ENCODE measurements at regions of chr2 and their contacts with region 1.

Region 1: DNA sequence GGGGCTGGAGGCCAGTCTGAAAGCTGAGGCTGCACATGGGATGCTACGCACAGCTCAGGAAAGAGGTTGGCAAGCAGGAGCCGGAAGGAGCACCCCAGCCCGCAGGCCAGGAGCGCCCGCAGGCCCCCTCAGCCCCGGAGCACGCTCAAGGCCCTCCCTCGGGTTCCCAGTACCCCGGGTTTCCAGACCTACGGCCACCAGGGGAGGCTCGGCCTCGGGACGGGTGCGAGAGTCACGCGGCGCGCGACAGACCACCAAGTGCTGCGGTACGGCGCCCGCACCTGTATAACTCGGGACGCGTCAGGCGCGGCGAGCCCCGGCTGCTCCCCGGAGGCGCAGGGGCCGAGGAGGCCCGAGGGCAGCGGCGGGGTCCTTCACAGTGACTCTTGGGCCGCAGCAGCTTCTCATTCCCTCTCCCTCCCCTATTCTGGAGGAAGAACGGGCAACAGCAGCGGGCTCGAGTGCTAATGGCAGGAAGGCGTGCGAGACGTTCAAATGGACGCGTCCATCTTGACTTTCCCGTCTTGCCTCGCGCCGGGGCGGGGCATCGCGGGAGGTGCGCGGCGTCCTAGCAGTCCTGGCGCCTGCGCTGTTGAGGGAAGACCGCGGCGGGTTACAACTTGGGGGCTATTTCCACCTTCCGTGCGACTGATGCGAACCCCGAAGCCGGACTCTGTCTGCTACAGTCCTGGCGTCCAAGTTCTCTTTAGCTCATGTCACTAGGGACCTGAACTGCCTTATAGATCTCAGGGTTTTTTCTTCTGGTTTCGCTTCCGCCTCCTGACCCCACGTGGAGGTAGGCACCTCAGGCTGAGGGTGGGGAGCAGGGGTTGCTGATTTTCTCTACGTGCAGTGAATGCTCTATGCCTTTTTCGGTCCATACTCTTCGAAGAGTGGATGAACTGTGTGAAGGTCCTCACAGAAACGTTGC is at the start of gene ANAPC1:
- DNase-seq: peak; percentile 84
- H3K4me3 Mint-ChIP-seq: peak within 1 kb of the TSS; percentile 95
- H3K27ac Mint-ChIP-seq: peak within 1 kb of the TSS; percentile 93
- H3K4me1 Mint-ChIP-seq: no peaks in the 10 kb centered on the region
- H3K27me3 Mint-ChIP-seq: peaks cover 4% of the 10 kb centered on the region
- total RNA-seq, gene ANAPC1: 120 and 126 TPM in 2 replicates

Region 2: GRCh38 chr2:111897924-111898702 is 14.2 kb after region 1 on chr2 and contains the start of gene MERTK:
- intact Hi-C with region 1: loop called (anchors 1 kb)
- DNase-seq: peak; percentile 27
- H3K4me3 Mint-ChIP-seq: peak within 1 kb of the TSS; percentile 80
- H3K27ac Mint-ChIP-seq: no peak within 1 kb of the TSS
- H3K4me1 Mint-ChIP-seq: peaks cover 17% of the 10 kb centered on the region
- H3K27me3 Mint-ChIP-seq: peaks cover 41% of the 10 kb centered on the region
- total RNA-seq, gene MERTK: 1.3 and 1.9 TPM in 2 replicates

Region 3: DNA sequence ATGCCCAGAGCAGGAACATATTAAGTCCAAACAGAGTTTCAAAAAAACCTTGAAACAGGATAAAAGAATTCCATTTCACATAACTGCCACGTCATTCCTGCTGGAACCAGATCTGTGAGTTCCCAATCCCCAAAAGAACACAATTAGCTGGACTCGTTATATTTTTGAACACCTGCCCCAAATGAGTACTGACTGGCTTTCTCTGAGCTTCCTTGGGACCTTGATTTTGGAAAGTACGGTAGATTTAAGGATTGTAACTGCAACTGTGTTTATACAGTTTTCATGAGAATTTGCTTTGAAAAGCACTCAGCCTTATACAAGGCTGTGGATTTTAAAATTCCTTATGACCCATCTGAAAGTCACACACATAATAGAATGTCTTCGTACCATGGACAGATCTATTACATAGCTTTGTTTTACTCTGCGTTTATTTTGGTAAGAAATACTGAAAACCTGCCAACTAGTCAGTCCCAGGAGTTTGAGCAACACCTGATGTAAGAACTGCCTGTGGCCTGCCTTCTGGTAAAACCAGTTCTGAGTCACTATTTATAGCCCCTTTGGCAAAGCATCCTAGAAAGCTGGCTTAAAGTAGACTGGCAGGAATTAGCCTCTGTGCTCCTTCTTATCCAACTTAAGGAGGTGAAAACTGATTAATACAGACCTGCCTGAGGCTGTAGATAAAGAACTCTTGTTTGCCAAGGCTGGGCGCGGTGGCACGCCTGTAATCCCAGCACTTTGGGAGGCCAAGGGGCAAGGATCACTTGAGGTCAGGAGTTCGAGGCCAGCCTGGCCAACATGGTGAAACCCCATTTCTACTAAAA is 62.6 kb after region 1 on chr2:
- intact Hi-C with region 1: no loop called
- DNase-seq: no peak
- H3K4me3 Mint-ChIP-seq: no peak overlapping the region
- H3K27ac Mint-ChIP-seq: no peak overlapping the region
- H3K4me1 Mint-ChIP-seq: no peaks in the 10 kb centered on the region
- H3K27me3 Mint-ChIP-seq: peaks cover 27% of the 10 kb centered on the region

Region 4: DNA sequence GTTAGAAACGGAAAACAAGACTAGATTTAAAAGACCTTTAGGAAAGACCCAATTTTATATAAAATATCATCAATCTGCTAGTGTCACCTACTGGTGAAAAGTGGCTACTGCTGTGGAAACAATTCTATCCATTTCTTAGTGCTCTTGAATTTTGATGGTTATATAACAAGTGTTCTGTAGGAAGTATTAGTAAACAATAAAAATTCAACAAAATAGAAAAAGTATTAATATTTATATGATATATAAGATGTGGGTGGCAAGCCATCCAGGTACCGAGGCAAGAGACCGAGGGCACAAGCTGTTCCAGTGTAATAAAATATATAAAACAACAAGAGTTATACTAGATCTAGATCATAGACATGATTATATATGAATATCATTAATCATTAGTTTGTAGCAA is 165.0 kb after region 1 on chr2:
- intact Hi-C with region 1: loop called (anchors 1 kb)
- DNase-seq: no peak
- H3K4me3 Mint-ChIP-seq: no peak overlapping the region
- H3K27ac Mint-ChIP-seq: no peak overlapping the region
- H3K4me1 Mint-ChIP-seq: peaks cover 7% of the 10 kb centered on the region
- H3K27me3 Mint-ChIP-seq: peaks cover 8% of the 10 kb centered on the region

Region 5: DNA sequence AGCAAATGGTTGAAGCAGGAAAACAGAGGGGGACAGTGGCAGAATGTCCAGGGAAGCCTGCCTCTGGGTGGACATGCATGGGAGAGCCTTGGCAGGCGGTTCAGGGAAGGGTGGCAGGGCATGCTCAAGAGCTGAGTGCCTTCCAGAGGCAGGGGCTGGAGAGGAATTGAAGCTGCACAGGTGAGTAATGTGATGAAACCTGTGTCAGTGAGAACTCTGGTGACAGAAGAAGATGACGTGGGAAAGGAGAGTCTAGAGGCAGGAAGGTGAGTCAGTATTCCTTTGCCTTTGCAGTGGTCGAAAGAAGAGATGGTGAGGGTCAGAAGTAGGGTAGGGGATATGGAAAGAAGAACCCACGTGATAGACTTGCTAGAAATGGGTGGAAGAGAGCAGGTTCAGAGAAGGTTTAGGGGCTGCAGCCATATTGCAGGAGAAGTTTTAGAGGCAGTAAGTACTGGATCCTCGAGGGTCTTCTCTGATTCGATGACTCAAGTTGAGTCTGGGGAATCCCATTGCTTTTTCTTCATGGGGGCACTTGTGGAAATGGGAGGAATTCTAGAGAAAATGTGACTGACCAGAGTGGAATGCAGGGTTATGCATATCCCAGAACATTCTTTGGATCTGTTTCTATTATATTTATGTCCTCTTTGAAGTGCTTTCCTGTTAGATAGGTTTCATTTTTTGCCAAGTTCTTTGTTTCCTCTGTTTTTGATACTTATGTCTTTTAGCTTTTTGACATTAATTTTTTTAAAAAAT is 208.5 kb after region 1 on chr2:
- intact Hi-C with region 1: no loop called
- DNase-seq: no peak
- H3K4me3 Mint-ChIP-seq: no peak overlapping the region
- H3K27ac Mint-ChIP-seq: no peak overlapping the region
- H3K4me1 Mint-ChIP-seq: peaks cover 18% of the 10 kb centered on the region
- H3K27me3 Mint-ChIP-seq: no peaks in the 10 kb centered on the region

Region 6: GRCh38 chr2:112137516-112138158 is 253.7 kb after region 1 on chr2:
- intact Hi-C with region 1: no loop called
- DNase-seq: no peak
- H3K4me3 Mint-ChIP-seq: peak overlapping the region; percentile 72
- H3K27ac Mint-ChIP-seq: peak overlapping the region; percentile 53
- H3K4me1 Mint-ChIP-seq: peaks cover 12% of the 10 kb centered on the region
- H3K27me3 Mint-ChIP-seq: peaks cover 24% of the 10 kb centered on the region

Region 7: DNA sequence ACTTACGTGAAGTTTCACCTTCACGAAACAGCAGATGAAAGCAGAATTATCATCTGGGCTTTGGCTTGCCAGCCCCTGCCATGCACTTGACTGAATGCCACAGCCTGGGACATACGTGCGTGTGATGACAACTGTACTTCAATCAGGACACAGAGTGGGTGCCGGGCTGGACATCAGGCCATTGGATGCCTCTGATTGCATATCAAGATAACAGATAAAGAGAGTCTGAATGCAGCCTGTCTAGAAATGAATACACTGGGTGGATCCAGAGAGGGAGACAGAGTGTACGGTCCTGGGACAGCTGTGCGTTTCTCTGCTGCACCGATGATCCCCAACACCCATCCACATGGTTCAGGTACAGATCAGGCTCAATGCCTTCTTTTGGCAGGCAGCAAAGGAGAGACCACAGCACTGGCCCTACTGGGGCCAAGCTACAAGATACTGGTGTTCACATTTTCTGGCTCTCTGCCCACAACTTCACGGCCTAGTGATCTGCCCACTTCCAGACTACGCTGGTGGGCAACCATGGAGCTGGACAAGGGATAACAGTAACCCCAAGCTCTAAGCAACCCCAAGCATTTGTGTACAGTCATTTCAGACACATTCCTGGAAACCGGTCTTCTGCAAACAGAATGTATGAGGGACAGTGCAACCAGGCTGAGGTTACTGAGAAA is 289.9 kb after region 1 on chr2:
- intact Hi-C with region 1: no loop called
- DNase-seq: no peak
- H3K4me3 Mint-ChIP-seq: no peak overlapping the region
- H3K27ac Mint-ChIP-seq: peak overlapping the region; percentile 76
- H3K4me1 Mint-ChIP-seq: peaks cover 31% of the 10 kb centered on the region
- H3K27me3 Mint-ChIP-seq: peaks cover 2% of the 10 kb centered on the region

Region 8: GRCh38 chr2:112254466-112255239 is 370.7 kb after region 1 on chr2 and contains the start of gene ZC3H8:
- intact Hi-C with region 1: loop called (anchors 1 kb)
- DNase-seq: peak; percentile 96
- H3K4me3 Mint-ChIP-seq: peak within 1 kb of the TSS; percentile 50
- H3K27ac Mint-ChIP-seq: peak within 1 kb of the TSS; percentile 91
- H3K4me1 Mint-ChIP-seq: peaks cover 27% of the 10 kb centered on the region
- H3K27me3 Mint-ChIP-seq: no peaks in the 10 kb centered on the region
- total RNA-seq, gene ZC3H8: 32.9 and 37.4 TPM in 2 replicates

Region 9: DNA sequence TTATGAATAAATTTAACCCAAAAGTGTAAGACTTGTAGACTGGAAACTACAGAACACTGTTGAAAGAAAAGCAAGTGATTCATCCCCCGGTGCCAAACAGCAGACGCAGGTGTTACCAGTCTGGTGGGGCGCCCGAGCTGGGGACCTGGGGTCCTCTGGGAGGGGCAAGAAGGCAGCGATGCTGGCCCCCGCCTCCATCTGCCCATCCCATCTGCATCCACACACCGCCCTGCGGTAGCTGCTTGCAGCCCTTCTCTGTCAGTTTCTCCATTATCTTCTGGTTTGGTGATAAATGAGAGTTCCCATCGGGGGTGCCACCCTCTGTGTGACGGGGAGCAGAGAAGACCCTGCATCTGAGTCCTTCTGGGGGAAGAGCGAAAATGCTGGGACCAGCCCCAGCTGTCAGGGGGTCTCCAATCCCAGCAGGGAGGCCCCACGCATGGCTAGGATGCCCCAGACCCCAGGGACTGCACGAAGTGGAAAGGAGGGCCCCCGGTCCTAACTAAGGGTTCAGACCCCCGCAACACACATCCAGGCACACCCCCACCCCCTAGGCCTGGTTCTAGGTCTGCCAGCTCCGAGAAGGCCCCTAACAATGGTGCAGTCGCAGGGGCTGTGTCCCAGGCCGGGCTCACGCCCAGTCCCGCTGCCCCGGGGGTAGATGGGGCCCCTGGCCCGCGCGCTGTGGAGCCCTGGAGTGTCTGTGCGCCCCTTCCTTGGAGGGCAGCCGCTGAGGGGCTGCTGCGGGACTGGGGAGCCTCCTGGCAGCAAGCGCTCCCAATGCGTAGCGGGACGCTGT is 550.2 kb after region 1 on chr2:
- intact Hi-C with region 1: loop called (anchors 10 kb)
- DNase-seq: no peak
- H3K4me3 Mint-ChIP-seq: peak overlapping the region; percentile 5
- H3K27ac Mint-ChIP-seq: no peak overlapping the region
- H3K4me1 Mint-ChIP-seq: peaks cover 18% of the 10 kb centered on the region
- H3K27me3 Mint-ChIP-seq: peaks cover 2% of the 10 kb centered on the region

Measured in activated T-helper 1 cell treated with anti-CD3 and anti-CD28 coated beads, Interleukin-12 subunit alpha, Interleukin-12 subunit beta, Interleukin-2, Interleukin-4 antibody, amounts not matched to agents 30 ng/mL and 10 ng/mL and 1 ng/mL, durations not matched to agents 14 hours and 24 hours and 36 hours (primary cell).